ENCODE measurements at regions of chr10 and their contacts with region 1.

Region 1: GRCh38 chr10:113385021-113385999 is 167.5 kb upstream of the HABP2 start:
- DNase-seq: peak; percentile 35
- H3K4me3 ChIP-seq: no peak overlapping the region
- H3K27me3 ChIP-seq: peaks cover 2% of the 10 kb centered on the region
- CTCF ChIP-seq: peak; percentile 88

Region 2: GRCh38 chr10:112471878-112472487 is 913.3 kb before region 1 on chr10:
- CTCF ChIA-PET with region 1: interaction called, 37 read pairs
- POLR2A ChIA-PET with region 1: no interaction called
- DNase-seq: no peak
- H3K4me3 ChIP-seq: no peak overlapping the region
- H3K27me3 ChIP-seq: no peaks in the 10 kb centered on the region
- CTCF ChIP-seq: peak; percentile 66

Region 3: GRCh38 chr10:113131613-113132261 is 253.6 kb before region 1 on chr10:
- CTCF ChIA-PET with region 1: interaction called, 16 read pairs
- POLR2A ChIA-PET with region 1: no interaction called
- DNase-seq: peak; percentile 76
- H3K4me3 ChIP-seq: no peak overlapping the region
- H3K27me3 ChIP-seq: no peaks in the 10 kb centered on the region
- CTCF ChIP-seq: no peak

Region 4: GRCh38 chr10:113216102-113216501 is 169.2 kb before region 1 on chr10:
- CTCF ChIA-PET with region 1: interaction called, 15 read pairs
- POLR2A ChIA-PET with region 1: no interaction called
- DNase-seq: no peak
- H3K4me3 ChIP-seq: no peak overlapping the region
- H3K27me3 ChIP-seq: no peaks in the 10 kb centered on the region; the same call in 1 of the 2 replicates
- CTCF ChIP-seq: peak; percentile 26; the same call in 1 of the 2 replicates

Region 5: DNA sequence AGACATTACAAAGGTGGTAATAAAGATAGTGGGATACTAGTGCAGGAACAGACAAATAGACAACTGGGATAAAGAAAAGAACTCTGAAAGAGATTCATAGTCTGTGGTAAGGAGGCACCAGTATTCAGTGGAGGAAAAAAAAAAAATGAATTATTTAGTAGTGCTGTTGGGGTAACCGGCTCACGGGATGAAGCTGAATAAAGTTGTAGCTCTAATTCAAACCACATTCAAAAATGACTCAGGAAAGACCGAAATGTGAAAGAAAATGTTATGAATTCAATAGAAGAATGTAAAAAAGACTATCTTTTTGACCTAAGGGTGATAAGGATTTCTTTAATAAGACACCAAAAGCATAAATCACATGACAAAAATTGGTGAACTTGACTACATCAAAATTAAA is 84.5 kb after region 1 on chr10:
- CTCF ChIA-PET with region 1: interaction called, 7 read pairs
- POLR2A ChIA-PET with region 1: interaction called, 16 read pairs
- DNase-seq: no peak
- H3K4me3 ChIP-seq: no peak overlapping the region
- H3K27me3 ChIP-seq: 0 out of 2 replicates have a peak, but pooled peaks cover 2% of the 10 kb centered on the region
- CTCF ChIP-seq: no peak

Region 6: DNA sequence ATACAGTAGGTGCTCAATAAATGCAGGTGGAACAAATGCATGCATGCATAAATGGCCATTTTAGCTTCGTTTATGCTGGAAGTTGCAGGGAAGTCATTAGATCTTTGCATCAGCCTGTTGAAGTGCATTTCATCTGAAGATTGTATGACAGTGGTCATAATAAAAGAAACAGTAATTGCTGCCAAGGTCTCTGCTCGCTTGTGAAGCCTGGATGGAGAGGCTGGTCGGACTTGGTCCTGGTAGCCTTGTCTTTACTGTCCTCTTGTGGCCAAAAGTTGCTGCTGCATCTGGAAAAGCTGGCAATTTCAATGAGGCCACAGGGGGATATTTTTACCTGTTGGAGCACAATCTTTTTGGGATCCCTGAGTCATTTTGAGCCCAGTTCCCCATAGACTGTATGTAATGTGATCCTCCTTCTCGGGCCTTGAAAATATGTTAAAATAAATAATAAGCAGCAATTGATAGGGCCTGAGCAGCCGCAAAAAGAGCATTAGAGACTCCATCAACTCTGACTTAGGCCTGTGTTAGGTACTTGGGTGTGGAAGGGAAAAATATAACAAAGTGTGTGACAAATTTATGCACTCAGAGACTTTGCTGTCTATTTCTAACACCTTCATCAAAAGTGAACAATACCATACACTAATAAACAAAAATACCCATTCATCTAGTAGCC is 135.9 kb after region 1 on chr10:
- CTCF ChIA-PET with region 1: interaction called, 15 read pairs
- POLR2A ChIA-PET with region 1: no interaction called
- DNase-seq: no peak
- H3K4me3 ChIP-seq: no peak overlapping the region
- H3K27me3 ChIP-seq: no peaks in the 10 kb centered on the region; the same call in 1 of the 2 replicates
- CTCF ChIP-seq: peak; percentile 99